ENCODE measurements at regions of chr17 and their contacts with region 1.

Region 1: GRCh38 chr17:8057691-8058114 is 18.8 kb downstream of the ALOX15B start:
- DNase-seq: no peak
- ATAC-seq: peak; percentile 80 to 92 (median 84)
- H3K4me3 ChIP-seq: no peak overlapping the region
- H3K27ac ChIP-seq: no peak overlapping the region
- H3K4me1 ChIP-seq: peaks cover 2% of the 10 kb centered on the region
- H3K27me3 ChIP-seq: peaks cover 3 to 38% (median 10%) of the 10 kb centered on the region in 3 donors
- CTCF ChIP-seq: peak; percentile 77

Region 2: DNA sequence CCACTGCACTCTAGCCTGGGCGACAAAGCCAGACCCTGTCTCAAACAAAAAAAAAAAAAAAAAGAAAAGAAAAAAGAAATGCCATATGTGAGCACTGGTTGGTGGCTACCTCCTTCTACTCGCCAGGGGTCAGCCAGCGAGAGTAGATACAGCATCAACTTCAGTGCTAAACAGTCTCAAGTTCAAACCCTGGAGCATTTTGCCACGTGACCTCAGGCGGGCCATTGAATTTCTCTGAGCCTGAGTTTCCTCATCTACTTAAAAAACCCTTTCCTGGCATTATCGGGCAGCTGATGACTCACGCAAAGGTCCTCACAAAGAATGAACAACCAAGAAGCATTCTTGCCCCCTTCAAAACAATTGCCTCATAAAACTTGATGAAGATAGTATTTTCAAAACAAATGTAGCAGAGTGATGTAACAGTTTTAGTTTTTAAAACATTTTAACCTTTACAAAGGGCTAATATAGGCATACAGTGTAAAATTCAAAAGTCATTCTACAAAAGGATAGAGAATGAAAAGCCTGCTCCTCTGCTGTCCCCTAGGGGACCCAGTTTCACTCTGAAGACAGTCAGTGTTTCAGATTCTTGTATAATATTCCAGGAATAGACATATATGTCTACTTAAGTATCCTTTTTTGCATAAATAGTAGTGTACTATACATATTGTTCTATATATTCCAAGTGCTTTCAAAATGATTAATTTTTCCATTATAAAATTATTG is 311.8 kb before region 1 on chr17:
- intact Hi-C with region 1: loop called in 1 of 2 experiments (anchors 10 kb)
- DNase-seq: no peak
- ATAC-seq: no peak
- H3K4me3 ChIP-seq: no peak overlapping the region
- H3K27ac ChIP-seq: no peak overlapping the region
- H3K4me1 ChIP-seq: no peaks in the 10 kb centered on the region
- H3K27me3 ChIP-seq: peaks cover 0 to 4% (median 4%) of the 10 kb centered on the region in 3 donors
- CTCF ChIP-seq: no peak

Region 3: DNA sequence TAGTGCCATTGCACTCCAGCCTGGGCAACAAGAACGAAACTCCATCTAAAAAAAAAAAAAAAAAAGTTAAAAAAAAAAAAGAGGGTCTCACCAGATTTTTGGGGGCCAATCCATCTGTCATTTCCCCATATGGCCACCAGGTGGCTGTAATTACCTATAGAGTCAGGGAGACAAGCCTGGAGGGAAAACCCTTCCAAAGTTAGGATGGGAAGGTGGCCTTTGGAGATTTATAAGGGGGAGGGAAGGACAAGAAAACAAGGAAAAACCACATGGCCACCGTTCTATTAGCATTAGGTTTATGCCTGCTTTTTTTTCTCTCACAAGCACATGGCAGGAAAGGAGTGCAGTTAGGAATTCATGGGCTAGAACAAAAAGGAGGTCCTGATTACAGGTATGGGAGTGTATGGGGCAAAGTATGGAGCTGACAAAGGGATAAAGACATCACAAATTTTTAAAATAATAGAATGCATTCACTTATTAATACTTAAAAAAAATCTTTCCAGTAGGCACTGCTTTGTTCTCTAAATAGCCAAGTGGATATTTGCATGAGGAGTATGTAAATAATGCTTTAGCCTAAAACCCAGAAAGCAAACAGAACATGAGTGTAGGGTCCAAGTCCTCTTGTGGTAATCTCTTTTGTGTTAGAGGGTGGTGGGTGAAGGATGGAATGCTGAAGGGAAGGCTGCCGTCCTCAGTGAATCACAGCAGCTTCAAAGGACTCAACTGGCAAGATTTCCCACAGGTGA is 194.8 kb before region 1 on chr17:
- intact Hi-C with region 1: loop called (anchors 5 kb)
- DNase-seq: no peak
- ATAC-seq: no peak
- H3K4me3 ChIP-seq: no peak overlapping the region
- H3K27ac ChIP-seq: no peak overlapping the region
- H3K4me1 ChIP-seq: peaks cover 12% of the 10 kb centered on the region
- H3K27me3 ChIP-seq: no peaks in the 10 kb centered on the region
- CTCF ChIP-seq: peak; percentile 82

Region 4: DNA sequence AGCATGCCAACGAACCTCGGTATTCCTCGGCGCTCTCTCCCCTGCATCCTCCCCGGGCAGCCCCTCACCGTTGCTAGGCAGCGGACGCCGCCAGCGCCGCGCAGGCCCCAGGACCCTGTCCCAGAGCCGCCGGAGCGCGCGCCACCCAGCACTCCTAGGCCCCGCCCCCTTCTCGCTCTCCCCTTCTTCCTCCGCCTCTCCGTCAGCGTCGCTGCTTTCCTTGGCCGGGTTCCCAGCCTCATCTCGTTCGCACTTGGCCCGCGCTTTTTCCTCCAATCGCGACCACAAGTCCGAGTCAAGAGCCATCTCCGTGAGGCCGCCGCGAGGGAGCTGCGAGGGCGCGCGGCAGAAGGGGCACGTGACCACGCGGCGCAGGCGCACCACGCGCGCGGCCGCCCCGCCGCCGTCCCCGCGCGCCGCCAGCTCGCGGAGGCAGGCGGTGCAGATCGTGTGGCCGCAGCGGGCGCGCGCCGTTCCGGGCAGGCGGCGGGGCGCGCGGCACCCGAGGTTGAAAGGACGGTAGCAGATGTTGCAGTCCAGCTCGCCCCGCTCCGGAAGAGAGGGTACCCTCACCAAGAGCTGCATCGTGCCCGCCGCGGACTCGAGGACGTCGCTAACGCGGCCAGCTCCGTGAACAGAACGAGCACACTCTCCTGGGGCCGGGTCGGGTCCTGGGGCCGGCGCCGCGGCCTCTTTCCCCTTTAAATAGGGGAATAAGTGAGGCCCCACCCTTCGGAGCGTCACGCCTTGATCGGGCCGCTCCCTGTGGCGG is 141.9 kb before region 1 on chr17 and contains the start of gene RNF227:
- intact Hi-C with region 1: loop called in 1 of 2 experiments (anchors 5 kb)
- DNase-seq: peak; percentile 88 to 95
- ATAC-seq: peak; percentile 83 to 93 (median 92)
- H3K4me3 ChIP-seq: peak within 1 kb of the TSS; percentile 87
- H3K27ac ChIP-seq: peak within 1 kb of the TSS; percentile 85
- H3K4me1 ChIP-seq: peaks cover 21% of the 10 kb centered on the region
- H3K27me3 ChIP-seq: no peaks in the 10 kb centered on the region
- CTCF ChIP-seq: no peak
- total RNA-seq, gene RNF227: 0.62 to 2.6 (median 1.0) TPM

Region 5: GRCh38 chr17:8016632-8017478 is 40.8 kb before region 1 on chr17:
- intact Hi-C with region 1: no loop called
- DNase-seq: peak in 1 of 2 donors; percentile 70
- ATAC-seq: peak in 3 of 4 donors; percentile 33 to 68 (median 66)
- H3K4me3 ChIP-seq: peak overlapping the region; percentile 53
- H3K27ac ChIP-seq: no peak overlapping the region
- H3K4me1 ChIP-seq: peaks cover 5% of the 10 kb centered on the region
- H3K27me3 ChIP-seq: peaks cover 0 to 23% (median 8%) of the 10 kb centered on the region in 3 donors
- CTCF ChIP-seq: peak; percentile 30

Region 6: GRCh38 chr17:8109661-8110464 is 52.2 kb after region 1 on chr17:
- intact Hi-C with region 1: loop called (anchors 2 to 5 kb)
- DNase-seq: peak; percentile 49 to 71
- ATAC-seq: peak; percentile 71 to 81 (median 78)
- H3K4me3 ChIP-seq: no peak overlapping the region
- H3K27ac ChIP-seq: no peak overlapping the region
- H3K4me1 ChIP-seq: no peaks in the 10 kb centered on the region
- H3K27me3 ChIP-seq: peaks cover 0 to 56% (median 7%) of the 10 kb centered on the region in 3 donors
- CTCF ChIP-seq: peak; percentile 69

Region 7: GRCh38 chr17:8300627-8301242 is 243.0 kb after region 1 on chr17:
- intact Hi-C with region 1: loop called in 1 of 2 experiments (anchors 1 kb)
- DNase-seq: peak; percentile 43 to 72
- ATAC-seq: peak; percentile 88 to 93 (median 91)
- H3K4me3 ChIP-seq: no peak overlapping the region
- H3K27ac ChIP-seq: no peak overlapping the region
- H3K4me1 ChIP-seq: no peaks in the 10 kb centered on the region
- H3K27me3 ChIP-seq: no peaks in the 10 kb centered on the region
- CTCF ChIP-seq: peak; percentile 82